HEK293 (cell line): ENCODE measurements at regions of chr1 and their contacts with region 1.

Region 1: GRCh38 chr1:40090652-40091355 is 6.2 kb downstream of the PPT1 start:
- H3K4me3 ChIP-seq: no peak overlapping the region
- H3K27ac ChIP-seq: no peak overlapping the region
- H3K4me1 ChIP-seq: no peaks in the 10 kb centered on the region
- CTCF ChIP-seq: no peak

Region 2: DNA sequence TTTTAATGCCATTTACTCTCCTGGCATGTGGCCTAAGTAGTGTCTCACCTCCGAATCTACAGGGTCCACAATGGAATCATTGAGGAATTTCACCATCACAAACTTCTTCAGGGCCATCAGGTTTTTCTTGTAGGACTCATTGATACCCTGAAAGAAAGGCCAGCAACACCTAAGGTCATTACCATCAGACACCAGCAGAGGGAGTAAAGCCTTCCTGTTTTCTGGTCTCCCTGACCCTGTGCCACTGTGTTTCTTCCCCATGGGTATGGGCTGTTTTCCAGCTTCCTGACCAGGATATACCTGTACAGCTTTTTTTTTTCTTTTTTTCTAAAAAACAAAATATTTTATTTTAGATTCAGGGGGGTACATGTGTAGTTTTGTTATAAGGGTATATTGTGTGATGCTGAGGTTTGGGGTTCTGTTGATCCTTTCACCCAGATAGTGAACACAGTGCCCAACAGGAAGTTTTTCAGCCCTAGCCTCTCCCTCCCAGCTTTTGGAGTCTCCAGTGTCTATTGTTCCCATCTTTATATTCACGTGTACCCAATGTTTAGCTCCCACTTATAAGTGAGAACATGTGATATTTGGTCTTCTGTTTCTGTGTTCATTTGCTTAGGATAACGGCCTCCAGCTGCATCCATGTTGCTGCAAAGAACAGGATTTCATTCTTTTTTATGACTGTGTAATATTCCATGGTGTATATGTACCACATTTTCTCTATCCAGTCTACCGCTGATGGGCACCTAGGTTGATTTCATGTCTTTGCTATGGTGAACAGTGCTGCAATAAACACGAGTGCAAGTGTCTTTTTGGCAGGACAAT is 12.1 kb before region 1 on chr1:
- CTCF ChIA-PET with region 1: interaction called, 10 read pairs
- POLR2A ChIA-PET with region 1: no interaction called
- H3K4me3 ChIP-seq: no peak overlapping the region
- H3K27ac ChIP-seq: no peak overlapping the region
- H3K4me1 ChIP-seq: no peaks in the 10 kb centered on the region
- CTCF ChIP-seq: peak; percentile 17; the same call in 1 of the 2 replicates

Region 3: GRCh38 chr1:40553017-40553416 is 462.2 kb after region 1 on chr1:
- CTCF ChIA-PET with region 1: no interaction called
- POLR2A ChIA-PET with region 1: no interaction called
- H3K4me3 ChIP-seq: no peak overlapping the region
- H3K27ac ChIP-seq: no peak overlapping the region
- H3K4me1 ChIP-seq: no peaks in the 10 kb centered on the region
- CTCF ChIP-seq: no peak